SK-N-SH (cell line): ENCODE measurements at regions of chr7 and their contacts with region 1.

Region 1: GRCh38 chr7:90211391-90212148 is at the start of gene STEAP2:
- DNase-seq: peak; percentile 96
- H3K4me3 ChIP-seq: peak within 1 kb of the TSS; percentile 90 to 97
- H3K27ac ChIP-seq: peak within 1 kb of the TSS; percentile 71 to 86
- H3K4me1 ChIP-seq: peaks cover 6 to 11% of the 10 kb centered on the region in 2 experiments; a peak in 2 of 4 replicates
- H3K27me3 ChIP-seq: no peaks in the 10 kb centered on the region
- CTCF ChIP-seq: peak; percentile 74
- EP300 ChIP-seq: peak; percentile 33 to 62; a peak in 1 of 4 replicates
- RAD21 ChIP-seq: peak; percentile 39
- polyA plus RNA-seq, gene STEAP2: 6.6 and 9.5 TPM in 2 replicates

Region 2: GRCh38 chr7:90192872-90193750 is 18.5 kb before region 1 on chr7:
- CTCF ChIA-PET with region 1: interaction called, 17 read pairs
- POLR2A ChIA-PET with region 1: interaction called, 4 read pairs
- DNase-seq: no peak
- H3K4me3 ChIP-seq: no peak overlapping the region
- H3K27ac ChIP-seq: no peak overlapping the region
- H3K4me1 ChIP-seq: no peaks in the 10 kb centered on the region
- H3K27me3 ChIP-seq: no peaks in the 10 kb centered on the region
- CTCF ChIP-seq: no peak
- EP300 ChIP-seq: no peak
- RAD21 ChIP-seq: no peak

Region 3: DNA sequence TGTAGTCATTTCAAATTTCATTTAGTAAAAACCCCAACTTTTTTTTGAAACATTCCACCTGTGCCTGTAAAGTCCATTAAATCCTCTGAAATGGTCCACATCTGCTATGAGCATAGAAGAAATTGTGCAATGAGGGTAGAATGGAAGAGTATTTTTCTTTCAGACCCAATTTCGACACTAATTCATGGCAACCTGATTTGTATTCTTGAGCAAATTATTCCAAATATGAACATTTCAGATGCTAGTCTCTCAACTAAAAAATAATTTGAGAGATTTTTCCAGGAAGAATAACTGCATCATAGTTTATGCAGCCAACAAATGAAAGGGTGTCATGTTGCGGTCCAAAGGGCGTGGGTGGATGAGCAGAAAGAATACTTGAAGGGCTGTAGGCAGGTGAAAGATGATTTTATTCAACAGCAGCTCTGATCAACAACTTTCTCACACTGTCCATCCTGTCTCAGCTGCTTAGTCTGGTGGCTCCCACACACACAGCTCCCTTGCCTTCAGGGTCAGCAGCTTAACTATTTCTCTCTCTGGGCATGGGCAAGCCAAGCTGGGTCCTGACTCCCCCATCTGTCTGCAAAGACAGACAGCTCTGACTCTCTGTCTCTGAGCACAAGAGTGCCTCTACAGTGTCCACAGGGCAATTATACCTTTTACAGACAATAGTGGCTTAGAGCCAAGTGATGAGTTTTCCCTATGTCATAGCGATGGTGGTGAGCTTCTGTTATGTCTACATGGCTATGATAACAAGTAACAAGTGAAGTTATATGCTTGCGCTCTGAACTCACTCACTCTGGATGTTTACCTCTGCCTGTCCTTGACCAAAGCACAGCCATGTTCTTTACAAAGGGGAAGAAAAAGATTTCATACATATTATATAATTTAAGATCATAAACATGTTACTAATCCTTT is 11.5 kb after region 1 on chr7:
- CTCF ChIA-PET with region 1: interaction called, 19 read pairs
- POLR2A ChIA-PET with region 1: no interaction called
- DNase-seq: no peak
- H3K4me3 ChIP-seq: no peak overlapping the region
- H3K27ac ChIP-seq: peak overlapping the region in 1 of 2 experiments; percentile 38; a peak in 2 of 4 replicates
- H3K4me1 ChIP-seq: peaks cover 4 to 17% of the 10 kb centered on the region in 2 experiments; a peak in 3 of 4 replicates
- H3K27me3 ChIP-seq: no peaks in the 10 kb centered on the region
- CTCF ChIP-seq: no peak
- EP300 ChIP-seq: no peak
- RAD21 ChIP-seq: no peak